Activated naive CD4-positive, alpha-beta T cell treated with anti-CD3 and anti-CD28 coated beads for 36 hours (primary cell): ENCODE measurements at regions of chr2 and their contacts with region 1.

Region 1: GRCh38 chr2:38076606-38077430 is 867 bp upstream of the CYP1B1 start:
- DNase-seq: peak; percentile 81
- H3K4me3 Mint-ChIP-seq: peak overlapping the region; percentile 75
- H3K27ac Mint-ChIP-seq: peak overlapping the region; percentile 72
- H3K4me1 Mint-ChIP-seq: peaks cover 23% of the 10 kb centered on the region
- H3K27me3 Mint-ChIP-seq: peaks cover 46% of the 10 kb centered on the region

Region 2: GRCh38 chr2:37982147-37982582 is 94.7 kb before region 1 on chr2:
- CTCF ChIA-PET with region 1: interaction called, 3 read pairs
- intact Hi-C with region 1: loop called (anchors 1 kb)
- DNase-seq: peak; percentile 73
- H3K4me3 Mint-ChIP-seq: no peak overlapping the region
- H3K27ac Mint-ChIP-seq: no peak overlapping the region
- H3K4me1 Mint-ChIP-seq: peaks cover 6% of the 10 kb centered on the region
- H3K27me3 Mint-ChIP-seq: no peaks in the 10 kb centered on the region

Region 3: GRCh38 chr2:38064801-38065501 is 11.9 kb before region 1 on chr2:
- CTCF ChIA-PET with region 1: no interaction called
- intact Hi-C with region 1: no loop called
- DNase-seq: no peak
- H3K4me3 Mint-ChIP-seq: no peak overlapping the region
- H3K27ac Mint-ChIP-seq: no peak overlapping the region
- H3K4me1 Mint-ChIP-seq: no peaks in the 10 kb centered on the region
- H3K27me3 Mint-ChIP-seq: peaks cover 4% of the 10 kb centered on the region

Region 4: DNA sequence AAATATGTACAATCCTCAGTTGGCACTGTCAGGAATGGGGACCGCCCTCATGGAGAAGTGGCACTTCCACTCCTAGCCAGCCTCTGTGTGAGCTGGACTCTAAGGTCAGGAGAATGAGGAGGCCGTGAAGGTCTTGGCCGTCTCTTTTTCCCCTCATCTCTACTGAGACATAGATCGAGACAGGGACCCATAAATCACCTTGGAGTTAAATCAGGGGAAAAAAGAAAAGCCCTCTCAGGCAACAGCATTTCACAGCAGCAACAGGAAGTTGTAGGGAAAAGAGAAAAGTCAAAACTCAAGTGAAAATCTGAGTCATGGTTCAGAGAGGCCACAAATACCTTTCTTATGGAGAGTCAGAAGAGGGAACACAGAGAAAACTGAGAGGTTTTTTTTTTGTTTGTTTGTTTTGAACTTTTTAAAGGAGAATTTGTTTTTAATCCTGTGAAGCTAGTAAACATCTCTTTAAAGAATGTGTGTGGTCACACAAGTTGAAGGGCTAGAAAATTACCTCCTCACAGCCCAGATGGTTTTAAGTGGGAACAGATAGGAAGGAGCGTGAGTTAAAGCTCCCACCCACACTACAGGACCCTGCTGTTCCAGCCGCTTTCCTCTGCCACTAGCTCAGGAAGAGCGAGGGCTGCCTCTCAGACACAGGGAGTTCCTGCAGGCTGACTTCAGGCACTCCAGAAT is 29.7 kb after region 1 on chr2:
- CTCF ChIA-PET with region 1: interaction called, 6 read pairs
- intact Hi-C with region 1: loop called (anchors 1 kb)
- DNase-seq: no peak
- H3K4me3 Mint-ChIP-seq: no peak overlapping the region
- H3K27ac Mint-ChIP-seq: no peak overlapping the region
- H3K4me1 Mint-ChIP-seq: peaks cover 14% of the 10 kb centered on the region
- H3K27me3 Mint-ChIP-seq: peaks cover 29% of the 10 kb centered on the region

Region 5: DNA sequence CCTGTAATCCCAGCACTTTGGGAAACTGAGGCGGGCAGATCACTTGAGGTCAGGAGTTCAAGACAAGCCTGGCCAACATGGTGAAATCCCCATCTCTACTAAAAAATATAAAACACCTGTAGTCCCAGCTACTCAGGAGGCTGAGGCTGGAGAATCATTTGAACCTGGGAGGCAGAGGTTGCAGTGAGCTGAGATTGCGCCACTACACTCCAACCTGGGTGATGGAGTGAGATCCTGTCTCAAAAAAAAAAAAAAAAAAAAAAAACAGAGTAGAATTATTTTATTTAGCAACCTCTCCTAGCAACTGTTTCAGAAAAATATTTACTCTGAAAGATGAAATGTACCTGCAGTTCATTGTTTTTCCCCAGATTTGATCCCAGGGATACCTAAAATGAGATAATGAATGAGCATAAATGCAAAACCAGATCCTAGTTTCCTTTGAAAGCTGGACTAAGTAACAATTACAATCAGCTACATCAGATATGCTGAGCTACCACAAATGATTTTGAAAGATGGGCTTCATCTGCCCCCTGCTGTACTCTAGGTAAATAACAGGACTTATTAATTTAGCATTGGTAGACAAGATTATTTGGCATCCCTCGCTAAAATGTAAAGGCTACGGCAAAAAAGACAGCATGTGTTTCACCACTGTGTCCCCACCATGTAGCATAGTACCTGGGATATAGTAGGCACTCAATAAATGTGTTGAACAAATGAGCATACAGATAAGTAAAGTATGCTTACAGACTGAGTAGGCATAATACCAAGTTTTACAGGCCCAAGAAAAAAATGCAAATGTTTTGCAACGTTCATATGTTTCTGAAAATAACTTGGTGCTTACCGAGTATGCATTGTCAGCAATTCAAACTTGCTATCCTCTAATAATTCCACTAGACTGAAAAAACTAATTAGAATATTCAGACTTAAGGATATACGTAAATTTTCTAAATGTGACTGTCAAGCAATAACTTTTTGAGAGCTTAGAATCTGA is 197.8 kb after region 1 on chr2:
- CTCF ChIA-PET with region 1: interaction called, 4 read pairs
- intact Hi-C with region 1: loop called (anchors 1 kb)
- DNase-seq: peak; percentile 53
- H3K4me3 Mint-ChIP-seq: no peak overlapping the region
- H3K27ac Mint-ChIP-seq: no peak overlapping the region
- H3K4me1 Mint-ChIP-seq: peaks cover 2% of the 10 kb centered on the region
- H3K27me3 Mint-ChIP-seq: no peaks in the 10 kb centered on the region

Region 6: DNA sequence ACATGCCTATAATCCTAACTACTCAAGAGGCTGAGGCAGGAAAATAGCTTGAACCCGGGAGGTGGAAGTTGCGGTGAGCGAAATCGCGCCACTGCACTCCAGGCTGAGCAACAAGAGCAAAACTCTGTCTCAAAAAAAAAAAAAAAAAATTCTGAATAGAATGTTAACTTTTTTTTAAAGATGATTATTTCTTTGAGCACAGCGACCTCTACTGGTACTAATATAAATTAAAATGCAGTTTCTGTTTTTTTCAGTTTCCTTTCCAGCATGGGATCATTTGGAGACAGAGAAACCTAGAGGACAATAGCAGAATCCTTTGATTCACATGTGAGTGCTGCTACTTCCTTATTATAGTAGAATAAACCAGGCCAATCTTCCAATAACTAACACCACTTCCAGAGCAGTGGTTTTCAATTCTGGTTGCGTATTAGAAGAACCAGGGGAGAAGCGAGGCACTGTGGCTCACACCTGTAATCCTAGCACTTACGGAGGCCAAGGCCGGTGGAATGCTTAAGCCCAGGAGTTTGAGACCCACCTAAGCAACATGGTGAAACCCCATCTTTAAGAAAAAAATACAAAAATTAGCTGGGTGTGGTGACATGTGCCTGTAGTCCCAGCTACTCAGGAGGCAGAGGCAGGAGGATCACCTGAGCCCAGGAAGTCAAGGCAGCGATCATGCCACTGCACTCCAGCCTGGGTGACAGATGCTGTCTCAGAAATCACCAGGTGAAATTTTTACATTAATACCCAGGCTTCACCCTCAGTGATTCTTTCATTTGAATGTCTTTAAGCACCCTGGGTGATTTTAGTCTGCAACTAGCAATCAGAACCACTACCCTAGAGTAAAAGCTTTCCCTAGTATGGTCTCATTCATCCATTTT is 664.3 kb after region 1 on chr2:
- CTCF ChIA-PET with region 1: no interaction called
- intact Hi-C with region 1: loop called (anchors 10 kb)
- DNase-seq: peak; percentile 33
- H3K4me3 Mint-ChIP-seq: no peak overlapping the region
- H3K27ac Mint-ChIP-seq: peak overlapping the region; percentile 47
- H3K4me1 Mint-ChIP-seq: peaks cover 48% of the 10 kb centered on the region
- H3K27me3 Mint-ChIP-seq: no peaks in the 10 kb centered on the region